Vagina (tissue), 2 donors: ENCODE measurements at regions of chr10 and their contacts with region 1.

Region 1: DNA sequence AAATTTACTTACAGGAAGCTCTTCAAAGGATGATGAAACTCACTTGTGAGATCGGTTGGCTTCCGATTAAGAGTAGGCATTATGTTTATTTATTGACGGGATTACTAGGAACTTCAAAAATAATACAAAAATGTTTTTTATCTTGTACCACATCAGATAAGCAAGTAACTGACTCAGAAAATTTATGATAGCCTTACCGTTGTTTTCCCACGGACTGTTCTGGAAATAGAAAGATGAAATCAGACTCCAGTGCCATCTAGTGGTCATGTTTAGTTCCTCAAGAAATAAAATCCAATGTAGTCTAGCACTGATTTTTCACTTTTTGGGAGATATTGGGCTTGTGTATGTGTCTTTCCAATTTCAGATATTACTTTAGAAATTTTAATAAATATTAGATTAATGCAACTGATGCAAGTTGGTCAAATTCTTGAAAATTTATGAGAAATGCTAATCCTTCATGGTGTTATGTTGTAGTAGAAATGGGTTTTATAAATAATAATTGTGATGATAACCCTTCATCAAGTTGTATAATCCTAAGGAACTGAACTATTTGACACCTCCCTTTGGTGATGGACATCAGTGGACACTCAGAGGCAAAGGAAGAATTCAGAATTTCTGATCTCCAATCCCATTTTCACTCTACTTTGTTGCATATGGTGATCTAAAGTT is 168.8 kb downstream of the TMEM26 start:
- DNase-seq: no peak
- H3K4me3 ChIP-seq: no peak overlapping the region
- H3K27ac ChIP-seq: peak overlapping the region; percentile 69
- H3K4me1 ChIP-seq: no peaks in the 10 kb centered on the region
- H3K27me3 ChIP-seq: no peaks in the 10 kb centered on the region
- CTCF ChIP-seq: peak; percentile 29 to 85 (median 56)
- POLR2A ChIP-seq: no peak

Region 2: DNA sequence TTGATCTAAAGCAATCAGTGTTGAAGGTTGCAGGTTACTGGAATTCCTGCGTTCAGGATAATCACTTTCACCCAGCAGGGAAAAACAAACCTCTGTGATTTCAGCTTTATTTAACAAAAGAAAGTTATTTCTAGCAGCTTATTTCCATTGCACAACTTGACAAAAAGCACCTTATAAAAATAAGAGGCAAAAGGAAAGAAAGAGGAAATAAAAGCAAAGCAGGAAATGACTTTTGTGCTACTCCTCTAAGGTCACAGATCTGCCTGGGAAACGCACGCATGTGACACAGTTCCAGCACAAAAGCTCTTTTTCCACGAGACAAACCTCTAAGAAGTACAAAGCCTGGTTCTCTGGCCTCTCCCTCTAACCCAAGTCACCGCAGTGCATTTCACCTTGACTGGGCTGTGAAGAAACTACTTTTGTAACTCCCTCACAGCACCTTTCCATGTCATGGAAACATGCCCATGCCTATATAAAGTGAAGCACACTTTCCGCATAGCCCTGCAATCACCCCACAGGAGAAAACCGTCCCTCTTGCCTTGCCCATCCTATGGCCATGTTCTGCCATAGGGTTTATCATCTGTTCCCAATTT is 895.6 kb before region 1 on chr10:
- intact Hi-C with region 1: no loop called
- DNase-seq: no peak
- H3K4me3 ChIP-seq: no peak overlapping the region
- H3K27ac ChIP-seq: no peak overlapping the region
- H3K4me1 ChIP-seq: peaks cover 8% of the 10 kb centered on the region
- H3K27me3 ChIP-seq: no peaks in the 10 kb centered on the region
- CTCF ChIP-seq: no peak
- POLR2A ChIP-seq: no peak

Region 3: GRCh38 chr10:60444494-60445064 is 839.8 kb before region 1 on chr10:
- intact Hi-C with region 1: no loop called
- DNase-seq: no peak
- H3K4me3 ChIP-seq: no peak overlapping the region
- H3K27ac ChIP-seq: no peak overlapping the region
- H3K4me1 ChIP-seq: peaks cover 20% of the 10 kb centered on the region
- H3K27me3 ChIP-seq: no peaks in the 10 kb centered on the region
- CTCF ChIP-seq: peak in 2 of 3 experiments; percentile 29 to 38
- POLR2A ChIP-seq: no peak

Region 4: GRCh38 chr10:60816628-60817397 is 467.5 kb before region 1 on chr10:
- intact Hi-C with region 1: loop called (anchors 5 kb)
- DNase-seq: no peak
- H3K4me3 ChIP-seq: peak overlapping the region in 1 of 2 donors; percentile 10
- H3K27ac ChIP-seq: peak overlapping the region; percentile 73
- H3K4me1 ChIP-seq: peaks cover 37% of the 10 kb centered on the region
- H3K27me3 ChIP-seq: no peaks in the 10 kb centered on the region
- CTCF ChIP-seq: peak; percentile 50 to 90 (median 60)
- POLR2A ChIP-seq: no peak

Region 5: GRCh38 chr10:61135276-61135721 is 149.1 kb before region 1 on chr10:
- intact Hi-C with region 1: loop called (anchors 10 kb)
- DNase-seq: no peak
- H3K4me3 ChIP-seq: no peak overlapping the region
- H3K27ac ChIP-seq: no peak overlapping the region
- H3K4me1 ChIP-seq: no peaks in the 10 kb centered on the region
- H3K27me3 ChIP-seq: no peaks in the 10 kb centered on the region
- CTCF ChIP-seq: no peak
- POLR2A ChIP-seq: no peak

Region 6: DNA sequence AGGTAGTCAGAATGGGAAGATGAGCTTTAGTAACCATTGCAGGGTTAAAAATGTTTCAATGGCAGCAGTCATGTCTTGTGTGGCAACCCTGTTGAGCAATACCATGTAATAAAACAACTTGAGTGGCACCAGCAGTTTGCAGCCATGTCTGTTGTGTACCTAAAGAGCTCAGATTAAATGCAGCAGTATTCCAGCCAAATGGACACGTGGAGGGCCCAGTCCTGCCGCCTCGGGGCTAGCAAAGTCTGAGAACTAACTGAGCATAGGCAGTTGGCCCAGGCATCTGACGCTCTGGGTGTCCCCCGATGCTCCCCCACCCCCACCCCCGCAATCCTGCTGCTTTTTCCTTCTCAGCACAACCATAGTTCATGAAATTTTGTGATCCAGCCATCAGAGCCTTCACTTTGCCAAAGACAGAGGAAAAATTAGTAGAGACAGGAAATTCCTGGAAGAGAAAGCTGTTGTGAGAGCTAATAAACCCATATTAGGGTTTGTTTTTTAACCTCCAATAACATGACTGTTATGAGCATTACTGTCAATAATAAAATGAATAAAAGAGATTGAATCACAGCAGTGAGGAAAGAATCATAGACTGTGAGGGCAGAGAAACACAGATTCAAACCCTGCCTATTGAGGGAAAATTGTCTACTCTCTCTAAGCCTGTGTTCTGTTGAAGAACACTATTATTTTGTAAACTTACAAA is 119.7 kb before region 1 on chr10:
- intact Hi-C with region 1: no loop called
- DNase-seq: peak in 1 of 2 donors; percentile 89
- H3K4me3 ChIP-seq: no peak overlapping the region
- H3K27ac ChIP-seq: peak overlapping the region; percentile 22
- H3K4me1 ChIP-seq: peaks cover 37% of the 10 kb centered on the region
- H3K27me3 ChIP-seq: no peaks in the 10 kb centered on the region
- CTCF ChIP-seq: no peak
- POLR2A ChIP-seq: no peak